Transverse colon (tissue), 4 donors: ENCODE measurements at regions of chr3 and their contacts with region 1.

Region 1: DNA sequence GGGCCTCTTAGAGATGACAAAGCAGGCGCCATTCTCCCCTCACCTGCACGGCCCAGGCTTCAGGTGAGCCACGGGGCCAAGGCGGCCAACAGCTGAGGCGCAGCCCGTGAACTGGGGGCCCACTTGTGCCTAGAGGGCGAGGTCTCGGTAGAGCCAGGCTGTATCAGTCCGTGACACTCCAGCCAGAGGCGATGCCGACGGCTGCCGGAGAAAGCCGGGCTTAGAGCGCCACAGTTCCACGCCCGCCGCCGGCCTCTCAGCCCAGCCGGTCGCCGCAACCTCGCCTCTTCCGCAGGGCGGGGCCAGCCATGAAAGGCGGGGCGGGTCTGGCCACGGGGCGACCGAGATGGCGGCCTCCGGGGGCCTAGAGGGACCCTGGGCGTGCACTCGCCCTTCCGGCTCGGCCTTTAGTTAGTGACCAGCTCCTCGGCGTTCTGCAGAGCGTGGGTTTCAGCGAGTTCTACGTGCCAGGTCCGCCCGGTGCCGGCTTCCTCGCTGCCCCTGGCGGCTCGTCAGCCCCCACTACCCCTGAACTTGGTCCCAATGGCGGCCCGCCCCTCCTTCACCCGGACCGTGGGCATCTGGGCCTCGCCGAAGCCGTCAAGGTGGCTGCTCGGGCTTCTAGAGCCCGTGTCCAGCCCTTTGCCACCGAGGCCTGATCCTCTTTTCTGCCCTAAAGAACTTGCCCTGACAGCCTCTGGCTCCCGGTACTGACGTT is at the start of gene ZNF621:
- DNase-seq: peak; percentile 94
- H3K4me3 ChIP-seq: peak within 1 kb of the TSS; percentile 72 to 98 (median 81)
- H3K27ac ChIP-seq: peak within 1 kb of the TSS; percentile 89 to 94 (median 92)
- H3K4me1 ChIP-seq: peaks cover 0 to 24% (median 16%) of the 10 kb centered on the region in 4 donors
- H3K27me3 ChIP-seq: no peaks in the 10 kb centered on the region
- CTCF ChIP-seq: peak in 1 of 5 experiments; percentile 8
- EP300 ChIP-seq: no peak
- POLR2A ChIP-seq: peak; percentile 92
- total RNA-seq, gene ZNF621: 11.9 to 21.9 (median 16.2) TPM

Region 2: GRCh38 chr3:40464339-40465110 is 60.2 kb before region 1 on chr3:
- in situ Hi-C with region 1: loop called in 1 of 4 experiments (anchors 10 kb)
- intact Hi-C with region 1: no loop called
- DNase-seq: no peak
- H3K4me3 ChIP-seq: no peak overlapping the region
- H3K27ac ChIP-seq: no peak overlapping the region
- H3K4me1 ChIP-seq: no peaks in the 10 kb centered on the region
- H3K27me3 ChIP-seq: no peaks in the 10 kb centered on the region
- CTCF ChIP-seq: no peak
- EP300 ChIP-seq: no peak
- POLR2A ChIP-seq: peak; percentile 8

Region 3: GRCh38 chr3:40869939-40870338 is 345.2 kb after region 1 on chr3:
- in situ Hi-C with region 1: no loop called
- intact Hi-C with region 1: no loop called
- DNase-seq: no peak
- H3K4me3 ChIP-seq: no peak overlapping the region
- H3K27ac ChIP-seq: no peak overlapping the region
- H3K4me1 ChIP-seq: no peaks in the 10 kb centered on the region
- H3K27me3 ChIP-seq: no peaks in the 10 kb centered on the region
- CTCF ChIP-seq: no peak
- EP300 ChIP-seq: no peak
- POLR2A ChIP-seq: no peak